SK-N-SH (cell line): ENCODE measurements at regions of chr5 and their contacts with region 1.

Region 1: DNA sequence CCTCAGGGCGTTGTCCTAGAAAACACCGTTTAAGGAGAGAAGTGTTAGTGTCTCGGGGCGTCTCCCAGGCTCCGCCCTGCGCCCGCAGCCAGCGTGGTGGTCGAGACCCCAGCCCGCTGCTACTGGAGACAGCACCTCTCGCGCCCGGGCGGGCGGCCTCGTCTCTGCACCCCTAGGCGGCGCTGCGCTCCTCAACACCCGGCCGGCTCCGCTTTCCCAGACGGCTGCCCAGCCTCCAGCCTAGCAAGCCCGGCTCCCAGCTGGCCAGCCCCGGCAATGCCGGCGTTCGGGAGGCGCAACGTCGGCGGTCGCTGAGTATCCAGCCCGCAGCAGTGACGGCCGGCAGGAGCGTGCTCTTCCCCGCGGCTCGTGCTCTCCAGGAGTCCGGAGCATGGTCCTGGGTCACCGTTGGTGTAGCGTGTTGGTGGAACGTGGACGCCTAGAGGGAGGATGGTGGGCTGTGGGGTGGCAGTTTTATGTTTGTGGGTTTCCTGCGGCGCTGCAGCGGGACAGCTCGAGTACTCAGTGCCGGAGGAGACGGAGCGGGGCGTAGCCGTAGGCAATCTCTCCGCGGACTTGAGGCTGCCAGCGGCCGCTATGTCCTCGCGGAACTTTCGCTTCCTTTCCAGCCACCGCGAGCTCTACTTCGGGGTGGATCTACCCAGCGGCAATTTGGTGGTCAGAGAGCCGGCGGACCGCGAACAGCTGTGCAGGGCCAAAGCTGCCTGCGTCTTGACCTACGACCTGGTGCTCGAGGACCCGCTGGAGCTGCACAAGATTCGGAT is 536 bp downstream of the PCDHAC1 start:
- DNase-seq: peak; percentile 95
- H3K4me3 ChIP-seq: peak overlapping the region; percentile 54 to 62
- H3K27ac ChIP-seq: peak overlapping the region in 1 of 2 experiments; percentile 79; a peak in 2 of 4 replicates
- H3K4me1 ChIP-seq: peaks cover 0 to 7% of the 10 kb centered on the region in 2 experiments; a peak in 2 of 4 replicates
- H3K27me3 ChIP-seq: no peaks in the 10 kb centered on the region
- CTCF ChIP-seq: peak; percentile 70
- EP300 ChIP-seq: no peak
- RAD21 ChIP-seq: peak; percentile 79

Region 2: DNA sequence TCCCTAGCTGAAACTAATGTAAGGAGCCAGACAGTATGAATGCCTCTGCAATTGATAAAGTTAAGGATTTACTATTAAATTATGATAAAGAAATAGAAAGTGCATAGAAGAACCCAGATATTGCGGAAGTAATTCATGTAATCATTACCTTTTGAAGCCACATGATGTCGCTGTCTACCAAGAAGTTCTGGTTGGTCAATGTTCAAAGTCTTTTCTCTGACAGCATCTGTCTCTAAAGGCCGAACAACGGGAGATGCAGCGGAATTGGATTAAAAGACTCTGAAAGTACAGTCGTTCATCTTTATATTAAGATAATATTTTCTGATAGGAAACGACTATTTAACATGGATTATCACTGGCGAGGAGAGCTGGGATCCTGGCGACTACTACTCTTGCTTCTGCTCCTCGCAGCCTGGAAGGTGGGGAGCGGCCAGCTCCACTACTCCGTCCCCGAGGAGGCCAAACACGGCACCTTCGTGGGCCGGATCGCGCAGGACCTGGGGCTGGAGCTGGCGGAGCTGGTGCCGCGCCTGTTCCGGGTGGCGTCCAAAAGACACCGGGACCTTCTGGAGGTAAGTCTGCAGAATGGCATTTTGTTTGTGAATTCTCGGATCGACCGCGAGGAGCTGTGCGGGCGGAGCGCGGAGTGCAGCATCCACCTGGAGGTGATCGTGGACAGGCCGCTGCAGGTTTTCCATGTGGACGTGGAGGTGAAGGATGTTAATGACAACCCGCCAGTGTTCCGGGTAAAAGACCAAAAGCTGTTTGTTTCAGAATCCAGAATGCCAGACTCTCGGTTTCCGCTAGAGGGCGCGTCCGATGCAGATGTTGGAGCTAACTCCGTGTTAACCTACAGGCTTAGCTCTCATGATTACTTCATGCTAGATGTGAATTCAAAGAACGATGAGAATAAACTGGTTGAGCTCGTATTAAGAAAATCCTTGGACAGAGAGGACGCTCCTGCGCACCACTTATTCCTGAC is 85.4 kb before region 1 on chr5 and contains the start of gene PCDHA8:
- CTCF ChIA-PET with region 1: interaction called, 39 read pairs
- POLR2A ChIA-PET with region 1: interaction called, 7 read pairs
- DNase-seq: peak; percentile 83
- H3K4me3 ChIP-seq: peak within 1 kb of the TSS; percentile 66 to 96
- H3K27ac ChIP-seq: peak within 1 kb of the TSS in 1 of 2 experiments; percentile 50; a peak in 1 of 4 replicates
- H3K4me1 ChIP-seq: no peaks in the 10 kb centered on the region
- H3K27me3 ChIP-seq: no peaks in the 10 kb centered on the region
- CTCF ChIP-seq: peak; percentile 87
- EP300 ChIP-seq: no peak
- RAD21 ChIP-seq: peak; percentile 92
- polyA plus RNA-seq, gene PCDHA8: 0.54 and 0.63 TPM in 2 replicates

Region 3: GRCh38 chr5:140946578-140946977 is 19.9 kb after region 1 on chr5:
- CTCF ChIA-PET with region 1: interaction called, 12 read pairs
- POLR2A ChIA-PET with region 1: no interaction called
- DNase-seq: no peak
- H3K4me3 ChIP-seq: no peak overlapping the region
- H3K27ac ChIP-seq: no peak overlapping the region
- H3K4me1 ChIP-seq: no peaks in the 10 kb centered on the region
- H3K27me3 ChIP-seq: no peaks in the 10 kb centered on the region
- CTCF ChIP-seq: no peak
- EP300 ChIP-seq: no peak
- RAD21 ChIP-seq: no peak

Region 4: GRCh38 chr5:140977003-140977402 is 50.4 kb after region 1 on chr5:
- CTCF ChIA-PET with region 1: interaction called, 12 read pairs
- POLR2A ChIA-PET with region 1: interaction called, 3 read pairs
- DNase-seq: no peak
- H3K4me3 ChIP-seq: no peak overlapping the region
- H3K27ac ChIP-seq: peak overlapping the region in 1 of 2 experiments; percentile 98; a peak in 2 of 4 replicates
- H3K4me1 ChIP-seq: peaks cover 9 to 33% of the 10 kb centered on the region in 2 experiments; a peak in 3 of 4 replicates
- H3K27me3 ChIP-seq: no peaks in the 10 kb centered on the region
- CTCF ChIP-seq: no peak
- EP300 ChIP-seq: peak in 1 of 2 experiments; percentile 28; a peak in 1 of 4 replicates
- RAD21 ChIP-seq: no peak

Region 5: DNA sequence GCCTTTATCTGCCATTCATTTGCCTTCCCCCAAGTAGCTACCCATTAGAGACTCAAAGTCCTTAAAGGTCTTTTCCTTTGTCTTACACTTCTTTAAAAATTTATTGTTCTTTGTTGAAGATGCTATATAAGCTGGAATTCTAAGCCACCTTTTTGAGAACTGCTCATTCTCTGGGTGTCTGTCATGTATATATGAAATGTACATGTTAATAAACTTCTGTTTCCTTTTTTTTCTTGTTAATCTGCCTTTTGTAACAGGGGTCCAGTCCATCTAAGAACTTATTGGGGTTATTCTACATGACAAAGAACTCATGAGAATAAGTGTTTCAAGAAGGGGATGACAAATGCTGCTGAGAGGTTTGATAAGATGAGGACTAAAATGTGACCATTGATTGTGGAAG is 81.2 kb after region 1 on chr5:
- CTCF ChIA-PET with region 1: interaction called, 40 read pairs
- POLR2A ChIA-PET with region 1: interaction called, 14 read pairs
- DNase-seq: no peak
- H3K4me3 ChIP-seq: no peak overlapping the region
- H3K27ac ChIP-seq: no peak overlapping the region
- H3K4me1 ChIP-seq: peaks cover 17 to 19% of the 10 kb centered on the region in 2 experiments; a peak in 3 of 4 replicates
- H3K27me3 ChIP-seq: no peaks in the 10 kb centered on the region
- CTCF ChIP-seq: no peak
- EP300 ChIP-seq: no peak
- RAD21 ChIP-seq: no peak